ENCODE measurements at regions of chr10 and their contacts with region 1.

Region 1: DNA sequence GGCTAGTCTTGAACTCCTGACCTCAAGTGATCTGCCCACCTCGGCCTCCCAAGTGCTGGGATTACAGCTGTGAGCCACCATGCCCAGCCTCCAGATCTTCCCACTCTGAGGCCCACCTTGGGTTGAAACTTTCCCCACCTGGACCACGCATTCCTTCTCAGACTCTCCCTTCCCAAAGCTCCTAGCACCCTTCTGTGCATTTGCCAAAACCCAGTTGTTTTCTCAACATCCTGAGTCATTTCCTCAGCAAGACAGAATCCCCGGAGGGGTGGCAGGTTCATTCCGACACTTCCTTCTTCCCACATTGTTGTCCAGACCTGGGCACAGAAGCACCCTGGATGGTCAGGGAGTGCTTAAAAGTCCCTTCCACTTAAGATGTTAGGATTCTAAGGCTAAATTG is 28.9 kb downstream of the BAG3 start:
- DNase-seq: peak in 1 of 2 donors; percentile 79
- H3K4me3 ChIP-seq: no peak overlapping the region
- H3K27ac ChIP-seq: peak overlapping the region; percentile 84 to 89
- H3K4me1 ChIP-seq: peaks cover 16 to 41% of the 10 kb centered on the region in 2 donors
- H3K27me3 ChIP-seq: no peaks in the 10 kb centered on the region
- CTCF ChIP-seq: no peak

Region 2: DNA sequence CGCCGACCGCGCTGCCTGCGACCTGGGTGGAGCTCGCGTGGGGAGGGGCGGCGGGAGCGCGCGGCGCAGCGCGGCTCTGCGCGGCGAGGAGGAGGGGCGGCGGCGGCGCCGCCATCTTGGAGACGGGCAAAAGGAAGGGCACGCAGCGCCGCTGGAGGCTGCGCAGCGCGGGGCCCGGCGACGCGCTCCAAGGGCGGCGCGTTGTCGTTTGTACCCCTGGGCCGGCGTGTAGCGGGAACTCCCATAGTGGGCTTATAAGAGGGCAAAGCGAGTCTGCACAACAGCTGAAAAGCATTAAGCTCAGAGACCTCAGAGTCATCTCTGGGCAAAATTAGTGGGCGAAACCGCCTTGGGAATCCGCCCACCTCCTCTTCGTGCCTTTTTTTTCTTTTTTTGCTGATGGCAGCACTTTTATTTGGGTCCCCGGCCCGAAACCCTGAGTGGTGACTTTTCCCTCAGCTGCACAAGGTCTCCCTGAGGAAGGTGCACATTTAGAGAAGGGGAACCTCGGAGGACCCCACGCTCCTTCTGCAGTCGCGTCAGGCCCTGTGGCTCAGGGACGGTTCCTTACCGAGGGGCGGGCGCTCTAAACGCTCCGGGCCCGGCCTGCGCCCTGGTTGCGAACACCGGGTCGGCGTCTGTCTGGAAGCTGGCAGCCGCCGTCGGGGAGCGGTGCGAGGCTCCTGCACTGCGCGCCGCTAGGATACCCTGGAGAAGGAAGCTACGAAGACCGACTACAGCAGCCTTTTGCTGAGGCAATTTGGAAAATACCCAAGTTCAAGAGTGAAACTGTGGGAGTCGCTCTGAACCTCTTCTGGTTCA is 193.0 kb after region 1 on chr10:
- intact Hi-C with region 1: loop called (anchors 5 kb)
- DNase-seq: peak; percentile 30 to 91
- H3K4me3 ChIP-seq: peak overlapping the region; percentile 72 to 91
- H3K27ac ChIP-seq: peak overlapping the region; percentile 85 to 90
- H3K4me1 ChIP-seq: peaks cover 0 to 18% of the 10 kb centered on the region in 2 donors
- H3K27me3 ChIP-seq: no peaks in the 10 kb centered on the region
- CTCF ChIP-seq: no peak

Measured in ascending aorta (tissue), 2 donors.